Endothelial cell of umbilical vein (primary cell): ENCODE measurements at regions of chr2 and their contacts with region 1.

Region 1: DNA sequence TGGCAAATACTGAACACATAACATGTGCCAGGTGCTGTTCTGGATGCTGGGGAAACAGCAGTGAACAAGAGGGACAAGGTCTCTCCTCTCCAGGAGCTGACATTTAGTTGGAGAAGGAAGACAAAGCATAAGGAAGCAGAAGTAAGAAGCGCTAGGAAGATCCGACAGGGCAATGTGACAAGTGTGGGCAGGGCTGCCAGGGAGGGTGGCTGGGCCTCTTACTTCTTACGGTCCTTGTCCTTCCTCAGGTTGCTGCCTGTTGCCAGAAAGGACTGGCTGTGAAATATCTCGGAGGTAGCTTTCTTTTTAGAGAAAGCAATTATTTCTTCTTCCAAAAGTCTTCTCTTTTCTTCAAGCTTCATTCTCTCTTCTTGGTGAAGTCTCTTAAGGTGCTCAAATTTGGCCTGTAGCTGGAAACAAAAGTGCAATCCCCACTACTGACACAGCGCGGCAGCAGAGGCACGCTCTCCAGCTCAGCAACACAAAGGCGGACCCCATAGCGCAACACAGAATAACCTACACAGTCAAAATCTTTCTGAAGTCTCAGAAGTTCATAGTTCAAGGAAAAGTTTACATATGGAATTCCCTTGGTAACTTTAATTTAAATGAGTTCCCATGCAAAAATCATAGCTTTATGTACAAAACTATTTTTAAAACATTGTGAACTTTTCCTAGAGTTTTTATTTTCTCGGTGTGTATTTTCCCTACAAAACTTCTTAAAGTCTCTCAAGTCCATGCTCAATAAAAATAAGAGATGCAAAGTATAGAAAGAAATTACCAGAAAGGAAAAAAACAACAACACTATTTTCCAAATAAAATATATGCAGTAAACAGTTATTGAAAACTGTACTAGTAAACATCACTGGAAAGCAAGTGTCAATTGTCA is 67.7 kb downstream of the SEPTIN10 start:
- DNase-seq: peak; percentile 80
- H3K4me3 ChIP-seq: no peak overlapping the region
- H3K27ac ChIP-seq: no peak overlapping the region
- H3K4me1 ChIP-seq: peaks cover 3% of the 10 kb centered on the region
- H3K27me3 ChIP-seq: no peaks in the 10 kb centered on the region
- CTCF ChIP-seq: peak; percentile 86 to 88
- POLR2A ChIP-seq: no peak

Region 2: DNA sequence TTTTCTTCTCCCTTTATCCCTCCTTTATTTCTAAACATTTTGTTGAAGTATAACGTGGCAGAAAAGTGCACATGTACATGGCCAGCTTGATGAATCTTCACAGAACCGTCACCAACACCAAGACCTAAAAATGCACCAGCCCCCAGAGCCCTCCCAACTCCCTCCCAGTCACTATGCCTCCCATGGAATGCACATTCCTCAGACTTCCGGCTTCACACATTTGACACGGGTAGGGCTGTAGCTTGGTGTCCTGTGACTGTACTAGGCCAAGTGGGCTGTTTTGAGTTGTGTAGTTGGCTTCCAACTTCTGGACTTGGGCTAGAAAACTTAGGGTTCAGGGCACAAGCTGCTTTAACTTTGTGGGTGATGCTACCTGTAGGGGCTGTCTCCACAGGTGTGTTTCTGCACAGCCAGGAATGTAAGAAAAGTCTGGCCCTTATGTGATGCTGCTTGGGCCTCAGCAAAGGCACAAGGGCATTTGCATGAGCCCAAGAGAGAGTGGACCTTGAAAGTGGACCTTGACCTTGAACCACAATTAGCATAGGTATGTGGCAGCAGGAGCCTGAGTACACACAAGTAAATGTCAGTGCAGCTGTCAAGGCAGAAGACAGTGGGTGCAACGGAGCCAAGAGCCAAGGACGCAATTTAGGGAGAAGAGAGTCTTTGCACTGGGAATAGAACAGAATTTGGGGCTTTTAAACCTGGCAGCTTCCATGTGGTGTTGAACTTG is 10.7 kb before region 1 on chr2:
- CTCF ChIA-PET with region 1: interaction called, 51 read pairs
- POLR2A ChIA-PET with region 1: no interaction called
- dilution Hi-C with region 1: no loop called
- intact Hi-C with region 1: no loop called
- DNase-seq: no peak
- H3K4me3 ChIP-seq: no peak overlapping the region
- H3K27ac ChIP-seq: no peak overlapping the region
- H3K4me1 ChIP-seq: no peaks in the 10 kb centered on the region
- H3K27me3 ChIP-seq: peaks cover 10% of the 10 kb centered on the region in 2 experiments
- CTCF ChIP-seq: no peak
- POLR2A ChIP-seq: no peak

Region 3: GRCh38 chr2:109604597-109604996 is 58.5 kb after region 1 on chr2:
- CTCF ChIA-PET with region 1: interaction called, 11 read pairs
- POLR2A ChIA-PET with region 1: no interaction called
- dilution Hi-C with region 1: no loop called
- intact Hi-C with region 1: no loop called
- DNase-seq: no peak
- H3K4me3 ChIP-seq: no peak overlapping the region
- H3K27ac ChIP-seq: no peak overlapping the region
- H3K4me1 ChIP-seq: peaks cover 33% of the 10 kb centered on the region
- H3K27me3 ChIP-seq: no peaks in the 10 kb centered on the region
- CTCF ChIP-seq: no peak
- POLR2A ChIP-seq: no peak

Region 4: GRCh38 chr2:109663721-109664120 is 117.7 kb after region 1 on chr2:
- CTCF ChIA-PET with region 1: interaction called, 20 read pairs
- POLR2A ChIA-PET with region 1: no interaction called
- dilution Hi-C with region 1: no loop called
- intact Hi-C with region 1: loop called (anchors 1 kb)
- DNase-seq: no peak
- H3K4me3 ChIP-seq: no peak overlapping the region
- H3K27ac ChIP-seq: no peak overlapping the region
- H3K4me1 ChIP-seq: no peaks in the 10 kb centered on the region
- H3K27me3 ChIP-seq: peaks cover 17 to 38% of the 10 kb centered on the region in 2 experiments
- CTCF ChIP-seq: no peak
- POLR2A ChIP-seq: no peak

Region 5: GRCh38 chr2:109715313-109715805 is 169.3 kb after region 1 on chr2:
- CTCF ChIA-PET with region 1: interaction called, 52 read pairs
- POLR2A ChIA-PET with region 1: no interaction called
- dilution Hi-C with region 1: no loop called
- intact Hi-C with region 1: loop called (anchors 1 kb)
- DNase-seq: no peak
- H3K4me3 ChIP-seq: no peak overlapping the region
- H3K27ac ChIP-seq: no peak overlapping the region
- H3K4me1 ChIP-seq: no peaks in the 10 kb centered on the region
- H3K27me3 ChIP-seq: peaks cover 2 to 5% of the 10 kb centered on the region in 2 experiments
- CTCF ChIP-seq: peak in 1 of 2 donors; percentile 23
- POLR2A ChIP-seq: no peak